CD4-positive, alpha-beta memory T cell (primary cell): ENCODE measurements at regions of chr10 and their contacts with region 1.

Region 1: DNA sequence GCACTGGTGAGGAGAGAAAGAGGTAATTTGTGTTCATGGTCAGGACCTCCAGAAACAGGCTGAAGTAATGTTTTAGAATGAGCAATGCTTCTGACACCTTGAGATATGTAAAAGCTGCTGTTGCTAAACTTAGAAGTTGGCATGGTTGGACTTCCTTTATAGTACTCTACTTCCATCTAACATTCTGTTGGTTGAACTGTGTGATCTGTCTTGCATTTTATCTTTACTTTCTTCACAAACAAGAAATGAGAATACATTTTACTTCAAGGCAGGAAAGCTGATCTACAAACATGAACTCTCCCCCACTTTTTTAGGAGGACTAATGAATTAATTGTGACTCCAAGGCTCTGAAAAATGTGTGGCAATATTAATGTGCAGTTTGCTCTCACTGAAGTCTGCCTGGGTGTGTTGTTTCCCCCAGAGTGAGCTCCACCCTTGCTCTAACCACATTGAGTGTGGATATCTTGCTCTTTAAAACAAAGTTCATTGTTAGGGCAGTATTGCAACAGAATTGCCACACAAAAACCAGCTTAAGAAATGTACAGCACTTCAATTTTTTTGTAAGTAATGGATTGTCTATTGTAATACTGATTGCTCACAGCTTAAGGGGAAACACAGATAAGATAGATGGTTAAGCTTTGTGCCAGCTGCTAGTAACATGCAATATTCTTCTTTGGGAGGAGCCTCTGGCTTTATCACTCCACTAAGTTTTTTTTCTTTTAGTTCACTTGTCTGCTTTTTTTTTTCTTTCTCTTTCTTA is 69.0 kb downstream of the ADD3 start:
- DNase-seq: peak; percentile 59 to 73 (median 66)
- H3K4me3 ChIP-seq: peak overlapping the region; percentile 48 to 53
- H3K4me3 Mint-ChIP-seq: peak overlapping the region; percentile 87 to 96 (median 92)
- H3K27ac ChIP-seq: peak overlapping the region; percentile 59
- H3K27ac Mint-ChIP-seq: peak overlapping the region; percentile 89 to 98 (median 92)
- H3K4me1 ChIP-seq: peaks cover 100% of the 10 kb centered on the region
- H3K4me1 Mint-ChIP-seq: peaks cover 69 to 92% (median 81%) of the 10 kb centered on the region in 4 donors
- H3K27me3 ChIP-seq: no peaks in the 10 kb centered on the region
- H3K27me3 Mint-ChIP-seq: no peaks in the 10 kb centered on the region

Region 2: GRCh38 chr10:109875151-109875568 is 201.6 kb before region 1 on chr10:
- CTCF ChIA-PET with region 1: no interaction called
- POLR2A ChIA-PET with region 1: no interaction called
- intact Hi-C with region 1: no loop called
- DNase-seq: no peak
- H3K4me3 ChIP-seq: no peak overlapping the region
- H3K4me3 Mint-ChIP-seq: no peak overlapping the region
- H3K27ac ChIP-seq: no peak overlapping the region
- H3K27ac Mint-ChIP-seq: no peak overlapping the region
- H3K4me1 ChIP-seq: no peaks in the 10 kb centered on the region
- H3K4me1 Mint-ChIP-seq: no peaks in the 10 kb centered on the region
- H3K27me3 ChIP-seq: no peaks in the 10 kb centered on the region
- H3K27me3 Mint-ChIP-seq: no peaks in the 10 kb centered on the region

Region 3: DNA sequence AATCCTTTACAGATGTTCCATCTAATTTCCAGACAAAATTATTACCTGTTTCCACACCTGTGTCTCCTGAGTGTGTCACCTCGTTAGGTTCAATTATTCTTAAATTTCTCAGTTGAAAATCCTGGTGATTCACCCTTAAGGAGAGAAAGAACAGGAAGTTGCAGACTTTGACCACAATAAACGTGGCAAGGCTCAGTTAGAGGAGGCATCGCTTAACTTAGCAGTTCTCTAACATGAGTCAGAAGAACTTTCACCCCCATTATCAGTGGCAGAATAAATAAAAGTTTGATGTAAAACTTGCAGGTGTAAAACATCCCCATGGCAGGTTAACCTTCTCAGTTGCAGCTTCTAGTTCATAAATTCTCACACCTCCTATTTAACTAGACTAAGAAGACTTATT is 161.8 kb before region 1 on chr10:
- CTCF ChIA-PET with region 1: no interaction called
- POLR2A ChIA-PET with region 1: interaction called, 6 read pairs
- intact Hi-C with region 1: loop called (anchors 5 kb)
- DNase-seq: peak; percentile 56 to 84 (median 60)
- H3K4me3 ChIP-seq: peak overlapping the region in 1 of 2 donors; percentile 15
- H3K4me3 Mint-ChIP-seq: peak overlapping the region in 7 of 8 donors; percentile 29 to 80 (median 72)
- H3K27ac ChIP-seq: peak overlapping the region; percentile 29
- H3K27ac Mint-ChIP-seq: peak overlapping the region; percentile 32 to 94 (median 77)
- H3K4me1 ChIP-seq: peaks cover 81% of the 10 kb centered on the region
- H3K4me1 Mint-ChIP-seq: peaks cover 58 to 95% (median 75%) of the 10 kb centered on the region in 4 donors
- H3K27me3 ChIP-seq: no peaks in the 10 kb centered on the region
- H3K27me3 Mint-ChIP-seq: no peaks in the 10 kb centered on the region

Region 4: DNA sequence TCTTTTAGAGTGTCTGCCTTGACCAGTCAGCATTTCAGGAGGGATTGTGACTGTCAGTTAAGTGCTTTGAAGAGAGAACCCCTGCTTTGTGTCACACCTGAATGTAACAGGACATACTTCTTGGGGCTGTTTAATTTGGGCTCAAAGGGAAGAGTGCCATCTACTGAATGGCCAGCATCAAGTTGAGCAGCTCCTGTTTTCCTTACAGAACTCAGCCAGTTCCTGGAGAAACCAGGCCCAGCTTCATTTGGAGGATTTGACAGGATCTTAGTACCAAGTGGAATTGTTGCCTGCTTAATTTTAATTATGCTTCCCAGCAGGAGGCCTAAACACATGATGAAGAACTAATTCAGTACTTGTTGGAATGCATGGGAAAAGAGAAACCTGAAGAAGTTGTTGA is 60.7 kb before region 1 on chr10:
- CTCF ChIA-PET with region 1: interaction called, 10 read pairs
- POLR2A ChIA-PET with region 1: interaction called, 116 read pairs
- intact Hi-C with region 1: no loop called
- DNase-seq: no peak
- H3K4me3 ChIP-seq: no peak overlapping the region
- H3K4me3 Mint-ChIP-seq: peak overlapping the region in 7 of 8 donors; percentile 16 to 75 (median 57)
- H3K27ac ChIP-seq: no peak overlapping the region
- H3K27ac Mint-ChIP-seq: peak overlapping the region; percentile 79 to 85 (median 83)
- H3K4me1 ChIP-seq: peaks cover 92% of the 10 kb centered on the region
- H3K4me1 Mint-ChIP-seq: peaks cover 60 to 92% (median 76%) of the 10 kb centered on the region in 4 donors
- H3K27me3 ChIP-seq: no peaks in the 10 kb centered on the region
- H3K27me3 Mint-ChIP-seq: no peaks in the 10 kb centered on the region

Region 5: DNA sequence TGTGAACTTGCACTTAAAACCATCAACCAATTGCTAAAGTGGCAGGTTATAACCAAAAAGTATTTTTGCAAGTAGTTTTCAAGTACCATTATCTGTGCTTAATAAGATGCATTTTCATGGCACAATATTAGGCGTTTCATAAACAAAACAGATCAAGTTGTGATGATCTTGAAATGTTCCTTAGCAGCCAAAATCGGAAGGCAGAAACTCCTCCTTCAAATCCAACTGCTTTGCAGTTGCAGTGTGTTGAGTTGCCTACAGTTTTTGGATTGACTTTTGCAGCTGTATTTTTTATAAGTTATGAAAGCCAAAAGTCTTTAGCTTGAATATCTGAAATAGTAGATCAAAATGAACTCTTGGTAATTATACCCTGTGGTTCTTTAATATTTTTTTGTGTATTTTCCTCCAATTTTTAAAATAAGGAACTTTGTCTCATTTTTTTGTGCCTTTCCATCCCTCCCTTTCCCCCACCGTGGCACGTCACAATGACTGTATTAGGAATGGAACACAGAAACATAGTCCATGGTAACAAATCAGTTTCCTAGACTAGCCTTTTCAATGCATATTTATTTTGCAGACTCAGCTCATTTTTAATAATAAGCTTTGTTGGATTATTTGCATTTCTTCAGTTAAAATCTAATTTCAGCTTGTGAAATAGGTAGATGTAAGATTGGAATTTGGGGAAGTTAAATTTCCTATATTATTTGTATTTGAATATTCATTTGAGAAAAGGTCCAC is 11.8 kb after region 1 on chr10:
- CTCF ChIA-PET with region 1: interaction called, 15 read pairs
- POLR2A ChIA-PET with region 1: interaction called, 23 read pairs
- intact Hi-C with region 1: loop called (anchors 2 kb)
- DNase-seq: no peak
- H3K4me3 ChIP-seq: no peak overlapping the region
- H3K4me3 Mint-ChIP-seq: peak overlapping the region in 1 of 8 donors; percentile 54
- H3K27ac ChIP-seq: no peak overlapping the region
- H3K27ac Mint-ChIP-seq: peak overlapping the region in 3 of 7 donors; percentile 60 to 92 (median 74)
- H3K4me1 ChIP-seq: peaks cover 70% of the 10 kb centered on the region
- H3K4me1 Mint-ChIP-seq: peaks cover 53 to 85% (median 67%) of the 10 kb centered on the region in 4 donors
- H3K27me3 ChIP-seq: no peaks in the 10 kb centered on the region
- H3K27me3 Mint-ChIP-seq: no peaks in the 10 kb centered on the region

Region 6: GRCh38 chr10:110109511-110109910 is 32.8 kb after region 1 on chr10:
- CTCF ChIA-PET with region 1: interaction called, 4 read pairs
- POLR2A ChIA-PET with region 1: interaction called, 9 read pairs
- intact Hi-C with region 1: loop called (anchors 5 kb)
- DNase-seq: no peak
- H3K4me3 ChIP-seq: no peak overlapping the region
- H3K4me3 Mint-ChIP-seq: no peak overlapping the region
- H3K27ac ChIP-seq: no peak overlapping the region
- H3K27ac Mint-ChIP-seq: peak overlapping the region in 4 of 7 donors; percentile 36 to 89 (median 64)
- H3K4me1 ChIP-seq: peaks cover 10% of the 10 kb centered on the region
- H3K4me1 Mint-ChIP-seq: peaks cover 26 to 44% (median 34%) of the 10 kb centered on the region in 4 donors
- H3K27me3 ChIP-seq: no peaks in the 10 kb centered on the region
- H3K27me3 Mint-ChIP-seq: no peaks in the 10 kb centered on the region